CD4-positive, alpha-beta memory T cell (primary cell): ENCODE measurements at regions of chr6 and their contacts with region 1.

Region 1: GRCh38 chr6:17706580-17707370 is at the start of gene NUP153:
- DNase-seq: peak; percentile 99 to 100 (median 99)
- H3K4me3 ChIP-seq: peak within 1 kb of the TSS; percentile 74 to 87
- H3K4me3 Mint-ChIP-seq: peak within 1 kb of the TSS; percentile 86 to 96 (median 93)
- H3K27ac ChIP-seq: peak within 1 kb of the TSS; percentile 99
- H3K27ac Mint-ChIP-seq: peak within 1 kb of the TSS; percentile 93 to 99 (median 97)
- H3K4me1 ChIP-seq: peaks cover 42% of the 10 kb centered on the region
- H3K4me1 Mint-ChIP-seq: peaks cover 22 to 52% (median 35%) of the 10 kb centered on the region in 4 donors
- H3K27me3 ChIP-seq: no peaks in the 10 kb centered on the region
- H3K27me3 Mint-ChIP-seq: no peaks in the 10 kb centered on the region
- total RNA-seq, gene NUP153: 57.0 to 60.7 TPM

Region 2: GRCh38 chr6:16128759-16129622 is 1577.8 kb before region 1 on chr6 and contains the start of gene MYLIP:
- CTCF ChIA-PET with region 1: no interaction called
- POLR2A ChIA-PET with region 1: no interaction called
- intact Hi-C with region 1: loop called (anchors 2 kb)
- DNase-seq: peak; percentile 96 to 97 (median 97)
- H3K4me3 ChIP-seq: peak within 1 kb of the TSS; percentile 66 to 89
- H3K4me3 Mint-ChIP-seq: peak within 1 kb of the TSS; percentile 95 to 99 (median 98)
- H3K27ac ChIP-seq: peak within 1 kb of the TSS; percentile 93
- H3K27ac Mint-ChIP-seq: peak within 1 kb of the TSS; percentile 96 to 98 (median 97)
- H3K4me1 ChIP-seq: peaks cover 38% of the 10 kb centered on the region
- H3K4me1 Mint-ChIP-seq: peaks cover 18 to 54% (median 31%) of the 10 kb centered on the region in 4 donors
- H3K27me3 ChIP-seq: no peaks in the 10 kb centered on the region
- H3K27me3 Mint-ChIP-seq: peaks cover 3% of the 10 kb centered on the region in 2 donors
- total RNA-seq, gene MYLIP: 17.5 to 19.9 TPM

Region 3: GRCh38 chr6:17584241-17584803 is 122.5 kb before region 1 on chr6:
- CTCF ChIA-PET with region 1: interaction called, 16 read pairs
- POLR2A ChIA-PET with region 1: interaction called, 3 read pairs
- intact Hi-C with region 1: loop called (anchors 5 kb)
- DNase-seq: peak in 4 of 5 donors; percentile 45 to 52 (median 47)
- H3K4me3 ChIP-seq: no peak overlapping the region
- H3K4me3 Mint-ChIP-seq: peak overlapping the region in 2 of 8 donors; percentile 1 to 3
- H3K27ac ChIP-seq: no peak overlapping the region
- H3K27ac Mint-ChIP-seq: peak overlapping the region in 3 of 7 donors; percentile 0 to 58 (median 2)
- H3K4me1 ChIP-seq: peaks cover 2% of the 10 kb centered on the region
- H3K4me1 Mint-ChIP-seq: peaks cover 2 to 4% (median 3%) of the 10 kb centered on the region in 4 donors
- H3K27me3 ChIP-seq: no peaks in the 10 kb centered on the region
- H3K27me3 Mint-ChIP-seq: peaks cover 5 to 10% of the 10 kb centered on the region in 2 donors

Region 4: DNA sequence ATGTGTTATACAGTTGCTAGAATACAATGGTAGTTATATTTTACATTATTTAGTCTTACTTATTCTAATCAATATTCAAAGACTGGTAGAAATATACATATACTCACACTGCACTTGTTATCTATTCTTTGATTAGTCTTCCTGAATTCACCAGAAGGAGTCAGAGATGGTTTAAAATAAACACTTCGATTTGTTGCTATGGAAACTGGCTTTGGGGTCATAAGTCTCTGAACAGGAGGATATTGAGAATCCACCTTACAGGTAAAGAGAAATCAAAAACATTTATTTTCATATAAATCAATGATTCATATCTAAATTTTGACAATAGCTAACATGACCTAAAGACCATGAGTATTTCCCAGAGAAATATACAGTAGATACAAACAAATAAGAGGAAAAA is 41.6 kb before region 1 on chr6:
- CTCF ChIA-PET with region 1: interaction called, 4 read pairs
- POLR2A ChIA-PET with region 1: no interaction called
- intact Hi-C with region 1: loop called (anchors 2 kb)
- DNase-seq: peak in 3 of 5 donors; percentile 6 to 24 (median 8)
- H3K4me3 ChIP-seq: no peak overlapping the region
- H3K4me3 Mint-ChIP-seq: peak overlapping the region in 6 of 8 donors; percentile 20 to 84 (median 56)
- H3K27ac ChIP-seq: peak overlapping the region; percentile 20
- H3K27ac Mint-ChIP-seq: peak overlapping the region in 6 of 7 donors; percentile 62 to 88 (median 74)
- H3K4me1 ChIP-seq: peaks cover 26% of the 10 kb centered on the region
- H3K4me1 Mint-ChIP-seq: peaks cover 20 to 36% (median 29%) of the 10 kb centered on the region in 4 donors
- H3K27me3 ChIP-seq: no peaks in the 10 kb centered on the region
- H3K27me3 Mint-ChIP-seq: no peaks in the 10 kb centered on the region

Region 5: GRCh38 chr6:17691925-17692538 is 14.7 kb before region 1 on chr6:
- CTCF ChIA-PET with region 1: interaction called, 22 read pairs
- POLR2A ChIA-PET with region 1: interaction called, 13 read pairs
- intact Hi-C with region 1: no loop called
- DNase-seq: no peak
- H3K4me3 ChIP-seq: no peak overlapping the region
- H3K4me3 Mint-ChIP-seq: peak overlapping the region in 3 of 8 donors; percentile 0 to 69 (median 7)
- H3K27ac ChIP-seq: no peak overlapping the region
- H3K27ac Mint-ChIP-seq: peak overlapping the region in 6 of 7 donors; percentile 15 to 81 (median 51)
- H3K4me1 ChIP-seq: peaks cover 67% of the 10 kb centered on the region
- H3K4me1 Mint-ChIP-seq: peaks cover 41 to 86% (median 65%) of the 10 kb centered on the region in 4 donors
- H3K27me3 ChIP-seq: no peaks in the 10 kb centered on the region
- H3K27me3 Mint-ChIP-seq: no peaks in the 10 kb centered on the region

Region 6: DNA sequence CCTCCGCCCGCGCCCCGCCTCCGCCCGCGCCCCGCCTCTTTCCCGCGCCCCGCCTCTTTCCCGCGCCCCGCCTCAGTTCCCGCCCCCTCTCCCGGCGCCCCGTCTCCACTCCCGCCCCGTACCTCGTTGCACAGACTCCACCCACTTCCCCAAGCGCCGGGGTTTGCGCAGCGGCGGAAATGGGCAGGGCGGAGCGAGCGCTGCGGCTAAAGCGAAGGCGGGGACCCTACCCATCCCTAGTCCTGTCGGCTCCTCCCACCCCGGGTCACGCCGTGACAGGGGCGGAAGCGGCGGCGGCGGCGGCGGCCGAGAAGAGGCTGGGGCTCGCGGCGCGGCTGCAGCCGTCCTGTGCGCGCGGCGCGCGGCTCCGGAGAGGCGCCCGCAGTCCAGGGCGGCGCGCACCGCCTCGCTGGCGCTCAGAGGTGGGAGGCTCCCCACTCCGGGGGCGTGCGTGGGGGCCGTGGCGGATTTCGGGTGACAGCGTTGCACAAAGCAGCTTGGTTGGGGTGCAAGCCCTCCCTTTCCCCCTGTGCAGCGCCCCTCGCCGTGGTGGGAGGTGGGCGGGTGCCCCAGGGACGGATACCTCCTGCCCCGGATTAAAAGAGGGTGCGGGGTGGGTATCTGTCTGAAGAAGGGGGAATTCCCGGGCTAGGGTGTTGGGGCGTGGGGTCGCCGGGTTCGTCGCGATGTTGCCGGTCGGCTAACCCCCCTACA is 448.5 kb after region 1 on chr6 and contains the start of gene KDM1B:
- CTCF ChIA-PET with region 1: interaction called, 3 read pairs
- POLR2A ChIA-PET with region 1: no interaction called
- intact Hi-C with region 1: loop called (anchors 1 kb)
- DNase-seq: peak; percentile 98 to 100 (median 99)
- H3K4me3 ChIP-seq: peak within 1 kb of the TSS; percentile 92 to 98
- H3K4me3 Mint-ChIP-seq: peak within 1 kb of the TSS; percentile 98 to 99 (median 99)
- H3K27ac ChIP-seq: peak within 1 kb of the TSS; percentile 83
- H3K27ac Mint-ChIP-seq: peak within 1 kb of the TSS; percentile 84 to 100 (median 99)
- H3K4me1 ChIP-seq: peaks cover 29% of the 10 kb centered on the region
- H3K4me1 Mint-ChIP-seq: peaks cover 17 to 36% (median 28%) of the 10 kb centered on the region in 4 donors
- H3K27me3 ChIP-seq: no peaks in the 10 kb centered on the region
- H3K27me3 Mint-ChIP-seq: no peaks in the 10 kb centered on the region
- total RNA-seq, gene KDM1B: 12.0 to 12.3 TPM

Region 7: DNA sequence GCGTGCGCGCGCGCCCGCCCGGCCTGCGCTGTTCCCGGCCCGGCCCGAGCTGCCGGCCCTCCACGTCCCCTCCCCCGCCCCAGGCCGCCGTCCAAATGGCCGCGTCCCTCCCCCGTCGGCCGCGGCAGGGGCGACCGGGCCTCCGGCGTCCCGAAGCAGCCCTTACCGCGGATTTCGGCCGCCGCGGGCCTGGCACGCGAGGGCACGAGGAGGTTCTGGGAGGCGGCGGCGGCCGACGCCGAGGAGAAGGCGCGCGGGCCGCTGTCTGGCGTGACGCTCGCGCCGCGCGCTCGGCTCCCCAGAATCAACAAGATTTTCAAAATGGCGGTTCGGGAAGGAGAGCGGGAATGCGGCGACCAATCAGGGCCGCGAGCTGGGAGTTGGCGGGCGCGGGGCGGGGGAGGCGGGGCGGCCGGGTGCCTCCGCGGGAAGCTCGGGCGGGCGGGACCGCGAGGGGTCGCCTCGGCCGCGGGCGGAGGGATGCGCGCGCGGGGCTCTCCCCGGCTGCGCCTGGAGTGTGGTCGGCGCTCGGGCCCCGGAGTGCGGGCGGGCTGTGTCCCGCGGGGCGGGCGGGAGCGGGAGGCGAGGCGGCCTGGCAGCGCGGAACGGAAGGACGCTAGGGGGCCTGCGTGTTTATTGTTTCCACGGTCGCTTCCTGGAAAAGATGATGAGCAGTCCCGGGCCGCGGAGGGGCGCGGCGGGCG is 557.6 kb after region 1 on chr6 and contains the start of gene DEK:
- CTCF ChIA-PET with region 1: no interaction called
- POLR2A ChIA-PET with region 1: interaction called, 3 read pairs
- intact Hi-C with region 1: loop called (anchors 1 kb)
- DNase-seq: peak; percentile 79 to 90 (median 81)
- H3K4me3 ChIP-seq: peak within 1 kb of the TSS; percentile 82 to 89
- H3K4me3 Mint-ChIP-seq: peak within 1 kb of the TSS; percentile 95 to 98 (median 96)
- H3K27ac ChIP-seq: peak within 1 kb of the TSS; percentile 76
- H3K27ac Mint-ChIP-seq: peak within 1 kb of the TSS; percentile 96 to 99 (median 98)
- H3K4me1 ChIP-seq: peaks cover 57% of the 10 kb centered on the region
- H3K4me1 Mint-ChIP-seq: peaks cover 42 to 55% (median 49%) of the 10 kb centered on the region in 4 donors
- H3K27me3 ChIP-seq: no peaks in the 10 kb centered on the region
- H3K27me3 Mint-ChIP-seq: no peaks in the 10 kb centered on the region
- total RNA-seq, gene DEK: 128 to 131 TPM